Endothelial cell of umbilical vein (primary cell): ENCODE measurements at regions of chr5 and their contacts with region 1.

Region 1: DNA sequence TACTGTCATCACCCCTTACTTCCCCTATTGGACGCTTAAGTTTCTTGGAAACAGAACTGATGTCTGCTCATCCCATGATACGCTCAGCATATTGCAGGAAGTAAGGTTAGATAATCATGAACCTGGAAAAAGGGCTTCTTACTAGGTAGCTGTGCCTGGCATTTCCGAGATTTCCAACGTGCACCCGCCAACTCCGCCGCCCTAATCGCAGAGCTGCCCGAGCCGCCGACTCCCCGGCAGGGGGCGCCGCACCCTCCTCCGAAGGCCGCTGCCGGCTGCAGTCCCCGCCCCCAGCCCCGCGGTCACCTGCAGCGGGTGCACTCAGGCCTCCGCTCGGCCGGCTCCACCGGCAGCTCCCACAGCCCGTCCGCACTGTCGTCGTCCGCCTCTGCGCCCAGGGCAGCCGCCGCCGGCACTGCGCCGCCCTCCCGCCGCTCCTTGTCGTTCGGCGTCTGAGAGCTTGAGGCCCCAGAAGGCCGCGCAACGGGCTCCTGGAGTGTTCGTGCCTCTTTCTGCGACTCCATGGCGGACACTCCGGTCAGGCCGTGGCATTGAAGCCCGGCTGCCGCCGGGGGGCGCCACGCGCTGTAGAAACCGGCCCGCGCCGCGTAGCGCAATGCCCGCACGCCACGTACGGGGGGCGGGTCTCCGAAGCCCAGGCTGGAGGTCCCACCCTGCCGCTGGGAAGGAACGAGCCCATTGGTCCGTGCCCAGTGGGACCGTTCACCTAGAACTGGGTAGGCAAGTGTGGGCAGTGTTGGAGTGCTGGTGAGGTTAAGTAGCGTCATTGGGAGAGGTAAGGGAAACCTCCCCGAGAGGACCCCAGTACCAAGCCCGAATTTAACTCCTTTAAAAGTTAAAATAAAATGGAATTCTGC is at the start of gene DTWD2:
- DNase-seq: peak; percentile 96
- H3K4me3 ChIP-seq: peak within 1 kb of the TSS; percentile 37 to 74 (median 56)
- H3K27ac ChIP-seq: no peak within 1 kb of the TSS
- H3K4me1 ChIP-seq: peaks cover 6% of the 10 kb centered on the region
- H3K27me3 ChIP-seq: peaks cover 0 to 2% of the 10 kb centered on the region in 2 experiments
- CTCF ChIP-seq: peak; percentile 96 to 97
- POLR2A ChIP-seq: no peak
- total RNA-seq, gene DTWD2: 1.1 and 2.3 TPM in 2 replicates

Region 2: DNA sequence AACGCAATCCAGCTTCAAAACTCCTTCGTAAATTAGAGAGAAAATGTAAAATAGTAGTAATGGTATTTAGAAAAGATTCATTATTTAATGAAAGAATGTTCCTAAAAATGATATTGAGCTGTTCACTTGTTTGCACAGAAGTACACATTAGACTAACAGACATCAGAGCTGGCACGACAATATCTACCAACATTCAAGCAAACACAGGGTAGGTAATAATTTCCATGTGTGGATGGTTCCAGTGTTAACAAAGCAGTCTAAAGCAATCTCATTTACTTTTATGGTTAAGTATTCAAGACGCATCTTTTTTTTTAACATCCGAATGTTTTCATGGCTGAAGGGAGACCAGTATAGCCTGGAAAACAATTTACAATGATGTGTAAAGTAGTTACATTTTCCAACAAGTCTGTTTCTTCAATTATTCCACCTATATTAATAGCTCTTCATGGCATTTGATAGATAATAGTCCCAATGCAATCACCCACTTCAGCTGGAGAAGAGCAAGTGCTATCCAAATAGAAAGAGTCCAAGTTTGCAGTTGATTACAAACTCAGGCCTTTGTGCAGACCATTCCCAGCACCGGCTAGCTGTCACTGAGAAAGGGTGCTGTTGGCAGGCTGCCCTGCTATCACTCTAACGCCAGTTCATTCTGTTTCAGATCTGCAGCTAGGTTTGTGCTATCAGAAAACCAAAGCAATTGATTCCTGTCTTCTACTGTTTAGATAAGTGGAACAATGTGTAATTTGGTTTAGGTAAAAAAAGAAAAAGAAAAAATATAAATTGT is 458.7 kb before region 1 on chr5:
- CTCF ChIA-PET with region 1: no interaction called
- POLR2A ChIA-PET with region 1: no interaction called
- dilution Hi-C with region 1: no loop called
- intact Hi-C with region 1: no loop called
- DNase-seq: no peak
- H3K4me3 ChIP-seq: no peak overlapping the region
- H3K27ac ChIP-seq: no peak overlapping the region
- H3K4me1 ChIP-seq: no peaks in the 10 kb centered on the region
- H3K27me3 ChIP-seq: no peaks in the 10 kb centered on the region
- CTCF ChIP-seq: no peak
- POLR2A ChIP-seq: no peak

Region 3: GRCh38 chr5:119022017-119022745 is 34.0 kb after region 1 on chr5:
- CTCF ChIA-PET with region 1: interaction called, 22 read pairs
- POLR2A ChIA-PET with region 1: no interaction called
- dilution Hi-C with region 1: no loop called
- intact Hi-C with region 1: no loop called
- DNase-seq: peak; percentile 58
- H3K4me3 ChIP-seq: no peak overlapping the region
- H3K27ac ChIP-seq: no peak overlapping the region
- H3K4me1 ChIP-seq: no peaks in the 10 kb centered on the region
- H3K27me3 ChIP-seq: no peaks in the 10 kb centered on the region
- CTCF ChIP-seq: no peak
- POLR2A ChIP-seq: no peak

Region 4: GRCh38 chr5:119070828-119071572 is 82.8 kb after region 1 on chr5 and contains the start of gene DMXL1:
- CTCF ChIA-PET with region 1: interaction called, 9 read pairs
- POLR2A ChIA-PET with region 1: no interaction called
- dilution Hi-C with region 1: no loop called
- intact Hi-C with region 1: loop called (anchors 1 kb)
- DNase-seq: peak; percentile 100
- H3K4me3 ChIP-seq: peak within 1 kb of the TSS; percentile 61 to 100 (median 74)
- H3K27ac ChIP-seq: peak within 1 kb of the TSS; percentile 64
- H3K4me1 ChIP-seq: peaks cover 9% of the 10 kb centered on the region
- H3K27me3 ChIP-seq: no peaks in the 10 kb centered on the region
- CTCF ChIP-seq: no peak
- POLR2A ChIP-seq: peak; percentile 6
- total RNA-seq, gene DMXL1: 24.7 and 26.1 TPM in 2 replicates

Region 5: DNA sequence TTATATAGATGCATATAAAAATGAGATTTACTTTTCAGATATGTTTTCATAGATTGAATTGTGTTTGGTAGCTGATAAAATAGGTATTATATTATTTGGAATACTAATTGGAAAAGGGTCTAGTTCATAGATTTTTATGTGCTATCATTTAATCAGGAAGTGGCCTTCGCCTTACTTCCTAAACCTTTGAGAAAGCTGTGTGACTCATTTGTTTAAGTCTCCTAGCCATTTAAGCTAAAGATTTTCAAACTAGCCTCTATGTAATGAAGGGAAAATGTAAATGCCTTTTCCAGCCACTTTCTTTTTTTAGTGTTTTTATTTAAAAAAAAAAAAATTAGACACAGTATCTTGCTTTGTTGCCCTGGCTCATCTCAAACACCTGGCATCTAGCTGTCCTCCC is 180.2 kb after region 1 on chr5:
- CTCF ChIA-PET with region 1: interaction called, 3 read pairs
- POLR2A ChIA-PET with region 1: no interaction called
- dilution Hi-C with region 1: no loop called
- intact Hi-C with region 1: loop called (anchors 5 kb)
- DNase-seq: peak; percentile 61
- H3K4me3 ChIP-seq: peak overlapping the region in 1 of 3 experiments; percentile 5
- H3K27ac ChIP-seq: no peak overlapping the region
- H3K4me1 ChIP-seq: peaks cover 10% of the 10 kb centered on the region
- H3K27me3 ChIP-seq: no peaks in the 10 kb centered on the region
- CTCF ChIP-seq: no peak
- POLR2A ChIP-seq: no peak

Region 6: DNA sequence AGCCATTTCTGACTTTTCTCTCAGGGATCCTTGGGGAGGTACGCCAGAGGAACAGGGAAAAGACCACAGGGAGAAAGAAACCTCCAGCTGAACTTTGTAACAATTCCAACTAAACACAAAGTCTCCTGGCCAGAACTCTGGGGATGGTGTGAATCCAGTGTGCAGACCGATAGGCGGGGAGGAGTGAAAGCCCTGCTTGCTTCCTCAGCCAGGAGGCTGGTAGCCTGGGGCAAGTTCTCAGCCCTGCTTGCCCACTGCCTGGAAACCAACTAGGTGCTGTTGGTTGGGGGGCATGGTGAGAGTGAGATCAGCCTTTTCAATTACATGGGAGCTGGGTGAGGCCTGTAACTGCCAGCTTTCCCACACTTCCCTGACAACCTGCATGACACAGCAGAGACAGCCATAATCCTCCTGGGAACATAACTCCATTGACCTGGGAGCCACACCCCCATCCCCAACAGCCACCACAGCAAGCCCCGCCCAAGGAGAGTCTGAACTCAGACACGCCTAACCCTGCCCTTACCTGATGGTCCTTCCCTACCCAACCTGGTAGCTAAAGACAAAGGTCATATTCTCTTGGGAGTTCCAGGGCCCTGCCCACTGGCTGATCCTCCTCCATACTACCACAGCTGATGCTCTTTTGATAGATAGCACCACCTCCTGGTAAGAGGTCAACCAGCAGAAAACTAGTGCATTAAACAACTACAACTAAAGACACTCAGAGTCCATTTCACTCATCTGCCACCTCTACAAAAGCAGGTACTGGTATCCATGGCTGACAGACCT is 267.5 kb after region 1 on chr5:
- CTCF ChIA-PET with region 1: interaction called, 44 read pairs
- POLR2A ChIA-PET with region 1: no interaction called
- dilution Hi-C with region 1: no loop called
- intact Hi-C with region 1: loop called (anchors 1 kb)
- DNase-seq: peak; percentile 28
- H3K4me3 ChIP-seq: no peak overlapping the region
- H3K27ac ChIP-seq: no peak overlapping the region
- H3K4me1 ChIP-seq: no peaks in the 10 kb centered on the region
- H3K27me3 ChIP-seq: no peaks in the 10 kb centered on the region
- CTCF ChIP-seq: peak; percentile 45 to 52
- POLR2A ChIP-seq: no peak

Region 7: DNA sequence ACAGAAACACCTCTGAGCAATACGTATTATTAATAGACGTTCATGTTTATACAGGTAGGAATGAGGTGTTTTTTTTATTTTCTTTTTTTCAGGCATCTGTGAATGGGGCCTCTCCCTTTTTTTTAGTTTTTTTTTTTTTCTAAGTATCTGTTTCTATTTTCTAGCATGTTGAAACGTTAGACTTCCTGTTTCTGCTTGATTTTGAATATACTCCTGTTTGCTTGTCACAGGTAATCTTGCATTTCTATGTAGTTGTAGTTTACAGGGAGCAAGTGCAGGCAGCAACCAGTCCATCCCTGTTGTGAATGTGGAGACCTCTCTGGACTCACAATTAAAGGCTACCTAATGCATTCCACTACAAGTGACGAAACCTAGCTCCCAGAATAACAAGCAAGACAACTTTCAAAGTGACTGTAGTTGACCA is 344.8 kb after region 1 on chr5:
- CTCF ChIA-PET with region 1: interaction called, 21 read pairs
- POLR2A ChIA-PET with region 1: no interaction called
- dilution Hi-C with region 1: no loop called
- intact Hi-C with region 1: loop called (anchors 1 kb)
- DNase-seq: no peak
- H3K4me3 ChIP-seq: no peak overlapping the region
- H3K27ac ChIP-seq: no peak overlapping the region
- H3K4me1 ChIP-seq: no peaks in the 10 kb centered on the region
- H3K27me3 ChIP-seq: no peaks in the 10 kb centered on the region
- CTCF ChIP-seq: no peak
- POLR2A ChIP-seq: no peak

Region 8: DNA sequence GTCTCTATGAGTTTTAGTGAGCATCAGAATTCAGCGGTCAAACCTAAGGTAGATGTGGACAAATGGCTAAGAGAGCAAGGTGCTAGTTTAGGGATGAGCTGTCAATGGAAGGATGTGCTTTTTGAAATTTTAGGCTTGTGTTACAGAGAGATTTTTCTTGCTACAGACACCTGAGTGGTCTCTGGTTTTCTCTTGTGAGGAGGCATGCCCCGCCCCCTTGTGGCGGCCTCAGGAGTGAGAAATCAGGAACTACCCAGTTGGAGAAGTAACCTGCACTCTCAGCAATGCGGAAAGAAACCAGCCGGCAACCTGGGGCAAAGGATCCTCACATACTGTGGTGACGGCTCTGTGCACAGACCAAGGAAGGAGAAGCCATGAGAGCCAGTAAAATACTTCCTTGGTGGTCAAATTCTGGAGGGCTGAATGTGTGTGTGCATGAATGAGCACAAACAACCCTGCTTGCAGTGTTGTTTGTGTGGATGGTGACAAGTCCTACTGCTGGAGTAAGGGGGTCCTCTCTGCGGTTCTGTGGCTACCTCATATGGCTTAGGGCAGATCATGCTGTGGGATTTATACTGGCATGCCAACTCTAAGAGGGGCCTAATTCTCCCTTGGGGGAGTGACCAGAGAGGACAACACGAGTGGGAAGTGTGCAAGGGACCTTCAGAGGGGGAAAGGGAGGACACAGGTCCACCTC is 447.4 kb after region 1 on chr5:
- CTCF ChIA-PET with region 1: interaction called, 57 read pairs
- POLR2A ChIA-PET with region 1: no interaction called
- dilution Hi-C with region 1: no loop called
- intact Hi-C with region 1: loop called (anchors 1 kb)
- DNase-seq: peak; percentile 62
- H3K4me3 ChIP-seq: no peak overlapping the region
- H3K27ac ChIP-seq: no peak overlapping the region
- H3K4me1 ChIP-seq: no peaks in the 10 kb centered on the region
- H3K27me3 ChIP-seq: peaks cover 4% of the 10 kb centered on the region in 2 experiments
- CTCF ChIP-seq: peak; percentile 59 to 80
- POLR2A ChIP-seq: no peak

Region 9: GRCh38 chr5:119458911-119459632 is 470.8 kb after region 1 on chr5:
- CTCF ChIA-PET with region 1: no interaction called
- POLR2A ChIA-PET with region 1: no interaction called
- dilution Hi-C with region 1: no loop called
- intact Hi-C with region 1: no loop called
- DNase-seq: no peak
- H3K4me3 ChIP-seq: no peak overlapping the region
- H3K27ac ChIP-seq: no peak overlapping the region
- H3K4me1 ChIP-seq: no peaks in the 10 kb centered on the region
- H3K27me3 ChIP-seq: no peaks in the 10 kb centered on the region
- CTCF ChIP-seq: no peak
- POLR2A ChIP-seq: no peak